ENCODE measurements at regions of chr22 and their contacts with region 1.

Region 1: GRCh38 chr22:45645526-45646414 is 25.9 kb upstream of the ATXN10 start:
- DNase-seq: peak; percentile 85
- H3K4me3 ChIP-seq: no peak overlapping the region
- H3K27ac ChIP-seq: no peak overlapping the region
- H3K4me1 ChIP-seq: peaks cover 0 to 9% (median 4%) of the 10 kb centered on the region in 4 donors
- H3K27me3 ChIP-seq: peaks cover 0 to 30% (median 12%) of the 10 kb centered on the region in 3 donors
- CTCF ChIP-seq: peak; percentile 50 to 97 (median 73)
- EP300 ChIP-seq: no peak
- POLR2A ChIP-seq: no peak

Region 2: GRCh38 chr22:45577746-45578523 is 67.8 kb before region 1 on chr22:
- intact Hi-C with region 1: loop called (anchors 2 kb)
- DNase-seq: peak; percentile 89
- H3K4me3 ChIP-seq: no peak overlapping the region
- H3K27ac ChIP-seq: peak overlapping the region in 1 of 4 donors; percentile 8
- H3K4me1 ChIP-seq: peaks cover 0 to 8% (median 6%) of the 10 kb centered on the region in 4 donors
- H3K27me3 ChIP-seq: peaks cover 0 to 19% (median 0%) of the 10 kb centered on the region in 3 donors
- CTCF ChIP-seq: peak; percentile 67 to 94 (median 89)
- EP300 ChIP-seq: no peak
- POLR2A ChIP-seq: no peak

Region 3: DNA sequence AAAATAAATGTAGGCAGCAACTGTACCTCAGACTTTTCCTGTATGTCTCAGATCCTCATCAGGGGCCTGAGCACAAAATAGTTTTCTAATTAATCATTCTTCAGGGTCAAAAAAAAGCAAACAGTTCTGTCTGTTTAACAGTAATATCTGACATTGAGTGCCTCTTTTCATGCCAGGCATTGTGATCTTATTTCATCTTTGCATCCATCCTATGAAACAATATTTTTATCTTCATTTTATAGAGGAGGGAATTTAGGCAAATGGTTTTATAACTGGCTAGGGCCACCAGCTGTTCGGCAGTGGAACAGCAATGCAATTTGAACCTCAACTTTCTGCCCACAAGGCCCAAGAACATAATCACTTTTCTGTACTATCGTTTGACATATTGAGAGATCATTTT is 185.6 kb after region 1 on chr22:
- intact Hi-C with region 1: loop called (anchors 2 kb)
- DNase-seq: no peak
- H3K4me3 ChIP-seq: no peak overlapping the region
- H3K27ac ChIP-seq: peak overlapping the region in 3 of 4 donors; percentile 36 to 73 (median 63)
- H3K4me1 ChIP-seq: peaks cover 0 to 19% (median 0%) of the 10 kb centered on the region in 4 donors
- H3K27me3 ChIP-seq: no peaks in the 10 kb centered on the region
- CTCF ChIP-seq: peak in 3 of 4 experiments; percentile 53 to 61 (median 59)
- EP300 ChIP-seq: no peak
- POLR2A ChIP-seq: no peak

Region 4: GRCh38 chr22:45863981-45864751 is 218.4 kb after region 1 on chr22:
- intact Hi-C with region 1: loop called (anchors 5 kb)
- DNase-seq: peak; percentile 64
- H3K4me3 ChIP-seq: no peak overlapping the region
- H3K27ac ChIP-seq: no peak overlapping the region
- H3K4me1 ChIP-seq: peaks cover 0 to 28% (median 23%) of the 10 kb centered on the region in 4 donors
- H3K27me3 ChIP-seq: peaks cover 23 to 38% (median 29%) of the 10 kb centered on the region in 3 donors
- CTCF ChIP-seq: peak in 3 of 4 experiments; percentile 41 to 74 (median 72)
- EP300 ChIP-seq: no peak
- POLR2A ChIP-seq: no peak

Measured in sigmoid colon (tissue), 7 donors.